ENCODE measurements at regions of chr2 and their contacts with region 1.

Region 1: DNA sequence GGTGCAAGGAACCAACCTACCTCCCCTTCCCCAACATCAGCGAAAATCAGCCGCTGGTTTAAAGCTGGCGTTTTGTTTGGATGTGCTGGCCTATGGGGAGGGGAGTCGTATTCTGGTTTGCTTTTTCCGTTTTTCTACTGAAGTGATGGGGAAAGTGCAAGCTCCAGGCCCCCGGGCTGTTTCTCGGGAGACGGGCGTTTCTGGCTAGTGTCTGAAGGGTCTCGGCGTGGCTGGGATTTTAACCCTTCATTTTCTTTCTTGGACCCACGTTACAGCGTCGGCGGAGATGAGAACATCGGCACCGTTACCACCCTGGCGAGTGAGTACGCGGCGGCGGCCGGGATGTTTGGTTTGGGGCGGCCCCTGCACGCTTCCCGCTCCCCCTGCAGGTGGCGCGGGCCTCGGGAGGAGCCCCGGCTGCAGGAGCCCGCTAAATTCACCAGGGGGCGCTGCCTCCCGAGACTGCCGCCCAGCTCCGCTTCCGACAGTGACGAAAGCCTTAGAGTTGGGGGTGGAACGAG is 70.7 kb downstream of the PLB1 start:
- DNase-seq: peak; percentile 83 to 94 (median 89)
- ATAC-seq: peak; percentile 97
- H3K4me3 ChIP-seq: peak overlapping the region; percentile 78 to 82
- H3K4me3 Mint-ChIP-seq: peak overlapping the region; percentile 92
- H3K27ac ChIP-seq: peak overlapping the region in 1 of 2 experiments; percentile 71
- H3K27ac Mint-ChIP-seq: peak overlapping the region; percentile 81
- H3K4me1 ChIP-seq: peaks cover 10% of the 10 kb centered on the region
- H3K4me1 Mint-ChIP-seq: peaks cover 17% of the 10 kb centered on the region
- H3K27me3 ChIP-seq: no peaks in the 10 kb centered on the region
- H3K27me3 Mint-ChIP-seq: no peaks in the 10 kb centered on the region
- CTCF ChIP-seq: peak; percentile 100

Region 2: GRCh38 chr2:28527196-28527595 is 39.4 kb before region 1 on chr2:
- CTCF ChIA-PET with region 1: no interaction called
- POLR2A ChIA-PET with region 1: no interaction called
- intact Hi-C with region 1: no loop called
- DNase-seq: no peak
- ATAC-seq: no peak
- H3K4me3 ChIP-seq: no peak overlapping the region
- H3K4me3 Mint-ChIP-seq: no peak overlapping the region
- H3K27ac ChIP-seq: no peak overlapping the region
- H3K27ac Mint-ChIP-seq: no peak overlapping the region
- H3K4me1 ChIP-seq: no peaks in the 10 kb centered on the region
- H3K4me1 Mint-ChIP-seq: no peaks in the 10 kb centered on the region
- H3K27me3 ChIP-seq: no peaks in the 10 kb centered on the region
- H3K27me3 Mint-ChIP-seq: peaks cover 27% of the 10 kb centered on the region
- CTCF ChIP-seq: no peak

Region 3: DNA sequence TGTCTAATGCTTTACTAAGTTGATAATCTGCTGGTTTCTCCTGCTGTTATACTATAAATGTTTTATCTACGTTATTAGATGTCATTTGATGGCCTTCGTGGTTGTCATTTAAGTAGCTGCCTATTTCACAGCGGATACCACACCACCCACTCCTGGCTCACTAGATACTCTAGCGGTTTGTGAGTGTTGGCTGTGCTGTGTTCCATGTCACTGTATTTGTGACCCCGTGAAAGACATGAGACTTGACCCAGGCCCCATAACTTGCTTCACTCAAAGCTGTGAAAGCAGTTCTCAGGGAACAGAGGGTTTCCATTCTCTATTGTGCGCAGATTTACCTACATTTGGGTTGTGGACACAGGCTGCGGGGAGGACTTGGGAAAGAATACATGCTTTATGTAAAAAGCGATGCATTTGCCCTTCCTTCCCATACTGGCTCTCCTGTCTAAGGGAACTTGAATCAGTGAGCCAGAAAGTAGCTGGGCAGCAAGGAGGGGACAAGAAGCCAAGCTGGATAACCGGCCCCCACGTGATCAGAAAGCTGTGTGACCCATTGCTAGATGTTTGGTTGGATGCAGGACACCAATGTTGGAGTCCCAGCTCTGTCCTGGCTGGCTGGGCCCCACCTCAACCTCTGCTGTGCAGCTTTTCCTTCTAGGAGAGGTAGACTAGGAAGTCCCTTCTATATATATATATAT is 18.5 kb before region 1 on chr2:
- CTCF ChIA-PET with region 1: interaction called, 11 read pairs
- POLR2A ChIA-PET with region 1: interaction called, 3 read pairs
- intact Hi-C with region 1: no loop called
- DNase-seq: peak in 5 of 9 experiments; percentile 8 to 82 (median 41)
- ATAC-seq: peak; percentile 59
- H3K4me3 ChIP-seq: no peak overlapping the region
- H3K4me3 Mint-ChIP-seq: no peak overlapping the region
- H3K27ac ChIP-seq: peak overlapping the region in 1 of 2 experiments; percentile 39
- H3K27ac Mint-ChIP-seq: no peak overlapping the region
- H3K4me1 ChIP-seq: peaks cover 20% of the 10 kb centered on the region
- H3K4me1 Mint-ChIP-seq: peaks cover 24% of the 10 kb centered on the region
- H3K27me3 ChIP-seq: no peaks in the 10 kb centered on the region
- H3K27me3 Mint-ChIP-seq: no peaks in the 10 kb centered on the region
- CTCF ChIP-seq: no peak

Region 4: GRCh38 chr2:28621172-28622100 is 54.9 kb after region 1 on chr2:
- CTCF ChIA-PET with region 1: interaction called, 6 read pairs
- POLR2A ChIA-PET with region 1: no interaction called
- intact Hi-C with region 1: loop called (anchors 1 to 2 kb)
- DNase-seq: peak; percentile 60 to 96 (median 78)
- ATAC-seq: peak; percentile 85
- H3K4me3 ChIP-seq: peak overlapping the region; percentile 19 to 33
- H3K4me3 Mint-ChIP-seq: peak overlapping the region; percentile 68
- H3K27ac ChIP-seq: peak overlapping the region; percentile 86 to 98
- H3K27ac Mint-ChIP-seq: peak overlapping the region; percentile 99
- H3K4me1 ChIP-seq: peaks cover 87% of the 10 kb centered on the region
- H3K4me1 Mint-ChIP-seq: peaks cover 92% of the 10 kb centered on the region
- H3K27me3 ChIP-seq: no peaks in the 10 kb centered on the region
- H3K27me3 Mint-ChIP-seq: no peaks in the 10 kb centered on the region
- CTCF ChIP-seq: no peak

Region 5: DNA sequence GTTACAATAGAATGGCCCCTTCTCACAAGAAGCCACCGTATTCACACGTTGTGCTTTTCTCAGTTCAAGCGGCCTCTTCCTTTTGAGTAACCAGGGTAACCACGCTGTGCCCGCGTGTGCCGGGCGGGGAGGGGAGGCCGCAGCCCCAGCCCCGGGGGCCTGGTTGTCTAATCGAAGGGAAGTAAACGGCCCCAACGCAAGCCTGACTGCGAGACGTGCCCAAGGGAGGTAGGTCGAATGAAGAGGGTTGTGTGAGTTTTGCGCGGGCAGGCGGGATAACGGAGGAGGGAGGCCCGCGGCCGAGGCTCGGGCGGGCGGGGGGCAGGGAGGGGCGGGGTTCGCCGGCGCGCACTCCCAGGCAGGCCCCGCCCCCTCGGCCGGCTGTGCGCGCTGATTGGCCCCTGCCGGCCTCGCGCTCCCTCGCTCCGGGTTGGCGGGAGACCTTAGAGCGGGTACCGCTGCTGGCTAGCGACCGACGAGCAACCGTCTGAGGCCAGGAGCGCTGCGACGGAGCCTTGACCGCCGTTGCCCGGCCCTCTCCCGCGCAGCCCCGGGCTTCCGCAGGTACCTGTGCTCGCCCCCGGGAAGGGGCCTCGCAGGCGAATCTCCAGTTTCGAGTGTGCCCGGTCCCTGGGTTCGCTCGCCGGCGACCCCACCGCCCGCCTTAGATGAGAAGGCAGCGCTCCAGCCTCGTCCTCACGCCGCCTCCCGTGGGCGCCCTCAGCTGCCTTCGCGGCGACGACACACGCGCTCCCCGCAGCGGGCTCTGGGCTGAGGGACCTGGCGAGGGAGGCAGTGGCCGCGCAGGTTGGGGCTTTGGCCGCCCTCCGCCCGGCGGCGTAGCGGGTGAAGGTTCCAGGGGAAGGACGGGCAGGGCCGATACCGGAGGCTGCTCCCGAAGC is 244.1 kb after region 1 on chr2 and contains the start of gene SPDYA:
- CTCF ChIA-PET with region 1: interaction called, 5 read pairs
- POLR2A ChIA-PET with region 1: no interaction called
- intact Hi-C with region 1: loop called in 1 of 2 experiments (anchors 2 kb)
- DNase-seq: peak; percentile 52 to 89 (median 76)
- ATAC-seq: peak; percentile 92
- H3K4me3 ChIP-seq: peak within 1 kb of the TSS; percentile 62 to 69
- H3K4me3 Mint-ChIP-seq: peak within 1 kb of the TSS; percentile 86
- H3K27ac ChIP-seq: peak within 1 kb of the TSS; percentile 24 to 69
- H3K27ac Mint-ChIP-seq: no peak within 1 kb of the TSS
- H3K4me1 ChIP-seq: peaks cover 6% of the 10 kb centered on the region
- H3K4me1 Mint-ChIP-seq: peaks cover 18% of the 10 kb centered on the region
- H3K27me3 ChIP-seq: no peaks in the 10 kb centered on the region
- H3K27me3 Mint-ChIP-seq: no peaks in the 10 kb centered on the region
- CTCF ChIP-seq: no peak
- total RNA-seq, gene SPDYA: 11.8 to 12.4 TPM

Region 6: GRCh38 chr2:28958689-28959088 is 392.1 kb after region 1 on chr2:
- CTCF ChIA-PET with region 1: no interaction called
- POLR2A ChIA-PET with region 1: no interaction called
- intact Hi-C with region 1: loop called in 1 of 2 experiments (anchors 2 kb)
- DNase-seq: peak in 8 of 9 experiments; percentile 15 to 78 (median 37)
- ATAC-seq: peak; percentile 56
- H3K4me3 ChIP-seq: no peak overlapping the region
- H3K4me3 Mint-ChIP-seq: no peak overlapping the region
- H3K27ac ChIP-seq: no peak overlapping the region
- H3K27ac Mint-ChIP-seq: no peak overlapping the region
- H3K4me1 ChIP-seq: no peaks in the 10 kb centered on the region
- H3K4me1 Mint-ChIP-seq: peaks cover 8% of the 10 kb centered on the region
- H3K27me3 ChIP-seq: no peaks in the 10 kb centered on the region
- H3K27me3 Mint-ChIP-seq: no peaks in the 10 kb centered on the region
- CTCF ChIP-seq: peak; percentile 75

Region 7: GRCh38 chr2:30072250-30072842 is 1505.8 kb after region 1 on chr2:
- CTCF ChIA-PET with region 1: no interaction called
- POLR2A ChIA-PET with region 1: no interaction called
- intact Hi-C with region 1: loop called in 1 of 2 experiments (anchors 10 kb)
- DNase-seq: peak in 8 of 9 experiments; percentile 25 to 72 (median 53)
- ATAC-seq: peak; percentile 85
- H3K4me3 ChIP-seq: no peak overlapping the region
- H3K4me3 Mint-ChIP-seq: no peak overlapping the region
- H3K27ac ChIP-seq: no peak overlapping the region
- H3K27ac Mint-ChIP-seq: no peak overlapping the region
- H3K4me1 ChIP-seq: no peaks in the 10 kb centered on the region
- H3K4me1 Mint-ChIP-seq: no peaks in the 10 kb centered on the region
- H3K27me3 ChIP-seq: no peaks in the 10 kb centered on the region
- H3K27me3 Mint-ChIP-seq: peaks cover 53% of the 10 kb centered on the region
- CTCF ChIP-seq: peak; percentile 57